PC-9 (cell line): ENCODE measurements at regions of chr10 and their contacts with region 1.

Region 1: DNA sequence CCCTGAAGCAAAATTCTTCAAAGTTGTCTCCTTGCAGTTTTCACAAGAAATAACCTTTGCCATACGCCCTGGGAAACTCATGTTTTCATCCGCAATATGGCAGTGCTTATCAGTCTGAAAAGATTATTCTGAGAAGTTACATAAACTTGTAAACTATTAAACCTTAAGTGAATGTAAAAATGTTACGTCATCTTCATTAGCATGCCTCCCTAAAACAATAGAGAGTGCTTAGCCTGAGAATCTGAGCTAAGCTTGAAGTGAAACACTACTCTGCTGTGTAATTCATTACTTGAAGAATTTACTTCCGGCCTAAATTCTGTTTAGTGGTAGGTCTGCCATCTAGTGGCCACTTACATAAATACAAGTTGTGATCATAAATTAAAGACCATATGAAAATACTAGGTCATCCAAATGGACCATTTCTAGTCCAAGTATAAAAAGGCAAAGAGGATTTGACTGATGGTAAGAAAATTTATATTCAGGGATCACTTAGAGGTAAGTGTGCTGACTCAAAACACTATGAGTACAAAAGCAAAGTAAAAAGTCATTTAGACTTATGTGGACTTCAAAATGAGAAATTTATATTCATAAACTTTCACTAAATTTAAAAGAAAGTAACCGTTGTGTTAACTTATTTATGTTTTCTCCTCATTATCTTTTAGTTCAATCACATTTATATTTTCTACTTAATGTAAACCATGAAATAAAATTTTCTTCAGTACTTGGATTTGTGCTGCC is 745.1 kb upstream of the LRRTM3 start:
- DNase-seq: peak; percentile 5 to 49
- H3K4me3 ChIP-seq: no peak overlapping the region
- H3K27ac ChIP-seq: no peak overlapping the region
- H3K4me1 ChIP-seq: no peaks in the 10 kb centered on the region
- H3K27me3 ChIP-seq: no peaks in the 10 kb centered on the region
- CTCF ChIP-seq: peak; percentile 92

Region 2: DNA sequence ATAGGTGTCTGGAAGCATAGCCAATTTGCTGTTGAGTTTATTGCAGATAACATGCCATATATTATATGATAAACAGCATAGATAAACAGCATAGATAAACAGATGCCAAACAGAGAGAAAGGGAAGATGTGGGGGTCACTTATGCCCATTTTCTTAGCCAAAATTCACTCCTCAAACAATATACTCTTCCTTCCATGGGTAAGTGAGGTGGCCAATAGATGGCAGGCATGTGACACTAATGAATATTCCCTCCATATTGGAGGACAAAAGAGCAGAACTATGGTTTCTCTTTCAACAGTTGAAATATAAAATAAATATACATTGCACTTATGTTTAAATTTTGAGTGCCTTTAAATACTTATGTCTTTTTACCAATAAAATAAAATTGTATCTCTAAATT is 1446.8 kb before region 1 on chr10:
- CTCF ChIA-PET with region 1: no interaction called
- POLR2A ChIA-PET with region 1: no interaction called
- intact Hi-C with region 1: loop called (anchors 1 kb)
- DNase-seq: peak in 1 of 2 experiments; percentile 11
- H3K4me3 ChIP-seq: no peak overlapping the region
- H3K27ac ChIP-seq: no peak overlapping the region
- H3K4me1 ChIP-seq: no peaks in the 10 kb centered on the region
- H3K27me3 ChIP-seq: no peaks in the 10 kb centered on the region
- CTCF ChIP-seq: peak; percentile 70

Region 3: DNA sequence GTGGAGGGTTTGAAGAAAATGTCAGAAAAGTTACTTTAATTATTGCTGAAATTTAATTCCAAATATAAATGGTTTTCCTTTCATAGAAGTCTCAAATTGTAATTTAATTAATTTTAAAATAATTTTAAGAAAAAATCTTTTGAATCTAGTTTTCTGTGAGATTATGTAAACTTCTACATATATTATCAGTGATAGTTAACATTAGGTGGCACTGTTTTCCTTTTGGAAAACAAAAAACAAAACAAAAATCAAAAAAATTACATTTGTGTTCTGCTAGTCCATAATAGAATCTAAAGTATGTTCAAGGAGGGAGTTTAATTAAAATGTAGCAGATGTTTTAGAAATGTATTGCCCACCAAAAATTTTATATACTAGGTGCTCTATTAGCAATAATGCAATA is 1202.8 kb before region 1 on chr10:
- CTCF ChIA-PET with region 1: interaction called, 5 read pairs
- POLR2A ChIA-PET with region 1: no interaction called
- intact Hi-C with region 1: loop called (anchors 5 kb)
- DNase-seq: no peak
- H3K4me3 ChIP-seq: no peak overlapping the region
- H3K27ac ChIP-seq: no peak overlapping the region
- H3K4me1 ChIP-seq: no peaks in the 10 kb centered on the region
- H3K27me3 ChIP-seq: no peaks in the 10 kb centered on the region
- CTCF ChIP-seq: peak; percentile 64

Region 4: GRCh38 chr10:65534771-65535170 is 646.0 kb before region 1 on chr10:
- CTCF ChIA-PET with region 1: no interaction called
- POLR2A ChIA-PET with region 1: interaction called, 10 read pairs
- intact Hi-C with region 1: no loop called
- DNase-seq: no peak
- H3K4me3 ChIP-seq: no peak overlapping the region
- H3K27ac ChIP-seq: no peak overlapping the region
- H3K4me1 ChIP-seq: no peaks in the 10 kb centered on the region
- H3K27me3 ChIP-seq: no peaks in the 10 kb centered on the region
- CTCF ChIP-seq: no peak

Region 5: DNA sequence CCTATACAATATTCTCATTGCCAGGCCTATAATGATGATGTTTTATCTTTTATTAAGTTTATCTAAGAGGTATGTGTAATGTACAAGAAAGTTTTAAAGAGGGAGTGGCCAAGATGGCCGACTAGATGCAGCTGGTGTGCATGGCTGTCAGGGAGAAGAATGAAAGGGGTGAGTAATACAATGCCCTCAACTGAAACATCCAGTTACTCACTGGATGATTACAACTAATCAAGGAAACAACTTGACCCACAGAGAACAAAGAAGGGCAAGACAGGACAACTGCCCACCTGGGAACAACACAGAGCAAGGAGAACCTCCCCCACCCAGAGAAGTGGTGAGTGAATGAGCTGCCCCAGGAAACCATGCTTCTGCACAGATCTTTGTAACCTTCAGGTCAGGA is 134.9 kb before region 1 on chr10:
- CTCF ChIA-PET with region 1: no interaction called
- POLR2A ChIA-PET with region 1: no interaction called
- intact Hi-C with region 1: no loop called
- DNase-seq: no peak
- H3K4me3 ChIP-seq: no peak overlapping the region
- H3K27ac ChIP-seq: no peak overlapping the region
- H3K4me1 ChIP-seq: no peaks in the 10 kb centered on the region
- H3K27me3 ChIP-seq: no peaks in the 10 kb centered on the region
- CTCF ChIP-seq: no peak